IMR-90 (cell line): ENCODE measurements at regions of chr5 and their contacts with region 1.

Region 1: GRCh38 chr5:151499501-151500035 is 52.2 kb downstream of the SLC36A1 start:
- DNase-seq: no peak
- ATAC-seq: no peak
- H3K4me3 ChIP-seq: no peak overlapping the region
- H3K27ac ChIP-seq: no peak overlapping the region
- H3K4me1 ChIP-seq: no peaks in the 10 kb centered on the region
- H3K27me3 ChIP-seq: no peaks in the 10 kb centered on the region
- CTCF ChIP-seq: no peak
- POLR2A ChIP-seq: no peak
- RAD21 ChIP-seq: no peak

Region 2: DNA sequence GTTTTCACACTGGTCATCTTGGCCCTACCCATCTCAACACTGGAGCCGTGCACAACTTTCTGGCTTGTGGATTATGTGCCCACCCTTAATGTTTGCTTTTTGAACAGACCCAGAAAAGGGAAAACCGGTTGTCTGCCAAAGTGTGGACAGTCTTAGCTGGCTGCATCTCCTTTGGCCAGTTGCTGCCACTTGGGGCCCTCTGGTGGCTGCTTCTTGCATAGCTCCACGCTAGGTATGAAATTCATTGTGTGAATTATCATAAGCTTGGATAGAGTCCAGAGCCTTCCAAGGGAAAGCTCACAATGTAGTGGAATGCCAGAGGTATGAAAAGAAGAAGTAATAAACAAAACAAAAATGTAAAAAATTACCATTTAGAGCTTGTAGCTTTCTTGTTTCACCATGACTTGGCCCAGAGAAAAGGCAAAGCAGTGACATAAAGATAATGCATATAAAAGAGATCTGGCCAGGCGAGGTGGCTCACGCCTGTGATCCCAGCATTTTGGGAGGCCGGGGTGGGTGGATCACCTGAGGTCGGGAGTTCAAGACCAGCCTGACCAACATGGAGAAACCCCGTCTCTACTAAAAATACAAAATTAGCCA is 183.5 kb before region 1 on chr5:
- CTCF ChIA-PET with region 1: no interaction called
- POLR2A ChIA-PET with region 1: no interaction called
- dilution Hi-C with region 1: no loop called
- in situ Hi-C with region 1: no loop called
- intact Hi-C with region 1: loop called (anchors 5 kb)
- DNase-seq: peak; percentile 63
- ATAC-seq: peak; percentile 95
- H3K4me3 ChIP-seq: no peak overlapping the region
- H3K27ac ChIP-seq: no peak overlapping the region
- H3K4me1 ChIP-seq: no peaks in the 10 kb centered on the region
- H3K27me3 ChIP-seq: no peaks in the 10 kb centered on the region
- CTCF ChIP-seq: peak; percentile 81
- POLR2A ChIP-seq: no peak
- RAD21 ChIP-seq: peak; percentile 63

Region 3: DNA sequence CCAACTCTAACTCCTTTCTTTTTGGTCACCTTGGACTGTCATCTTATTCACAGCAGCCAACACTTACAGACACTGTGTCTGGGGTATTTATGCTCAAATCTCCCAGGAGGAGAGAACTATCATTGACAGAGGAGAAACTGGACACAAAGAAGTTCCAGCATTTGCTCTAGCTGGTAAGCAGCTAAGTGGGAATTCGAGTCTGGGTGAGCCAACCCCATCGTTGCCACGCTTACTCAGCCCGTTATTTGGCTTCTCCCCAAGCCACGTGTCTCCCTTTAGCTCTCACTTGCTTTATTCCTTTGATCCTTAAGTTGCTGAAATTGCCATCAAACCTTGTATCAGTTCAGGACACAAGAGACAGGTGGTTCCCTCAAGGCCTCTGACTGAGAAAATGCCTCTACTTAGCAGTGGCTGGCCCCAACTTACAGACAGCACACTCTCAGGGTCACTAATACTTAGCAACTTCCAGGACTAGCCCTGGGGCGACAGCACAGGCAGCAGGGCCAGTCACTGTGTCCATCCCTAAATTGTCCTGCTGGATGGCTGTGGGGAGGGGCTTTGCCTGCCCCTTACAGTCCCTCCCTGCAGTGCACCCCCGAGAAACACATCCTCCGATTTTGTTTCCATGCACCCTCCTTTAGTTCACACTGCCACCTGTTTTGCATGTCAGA is 153.6 kb before region 1 on chr5:
- CTCF ChIA-PET with region 1: no interaction called
- POLR2A ChIA-PET with region 1: no interaction called
- dilution Hi-C with region 1: no loop called
- in situ Hi-C with region 1: no loop called
- intact Hi-C with region 1: no loop called
- DNase-seq: peak; percentile 28
- ATAC-seq: peak; percentile 53; the same call in 1 of the 2 replicates
- H3K4me3 ChIP-seq: no peak overlapping the region
- H3K27ac ChIP-seq: no peak overlapping the region
- H3K4me1 ChIP-seq: no peaks in the 10 kb centered on the region
- H3K27me3 ChIP-seq: peaks cover 5% of the 10 kb centered on the region
- CTCF ChIP-seq: no peak
- POLR2A ChIP-seq: no peak
- RAD21 ChIP-seq: no peak

Region 4: DNA sequence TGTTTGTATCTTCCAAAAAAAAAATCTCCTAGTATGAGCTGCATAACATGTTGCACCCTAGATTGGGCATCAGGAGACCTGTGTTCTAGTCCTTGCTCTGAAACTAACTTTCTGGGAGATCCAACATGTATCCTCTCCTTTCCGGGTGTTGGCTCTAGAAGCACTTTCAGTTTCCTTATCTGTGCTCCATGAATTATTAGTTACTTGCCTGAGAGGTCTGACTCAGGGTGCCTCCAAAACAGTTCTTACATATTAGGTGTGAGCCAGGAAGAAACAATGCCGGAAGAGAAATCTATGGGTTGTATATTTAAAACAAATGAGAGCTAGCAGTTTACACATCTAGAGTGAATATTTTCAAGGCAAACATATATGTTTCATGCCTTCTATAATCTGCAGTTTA is 115.5 kb before region 1 on chr5:
- CTCF ChIA-PET with region 1: no interaction called
- POLR2A ChIA-PET with region 1: no interaction called
- dilution Hi-C with region 1: no loop called
- in situ Hi-C with region 1: no loop called
- intact Hi-C with region 1: loop called (anchors 5 kb)
- DNase-seq: peak; percentile 5
- ATAC-seq: peak; percentile 53
- H3K4me3 ChIP-seq: no peak overlapping the region
- H3K27ac ChIP-seq: no peak overlapping the region
- H3K4me1 ChIP-seq: no peaks in the 10 kb centered on the region
- H3K27me3 ChIP-seq: no peaks in the 10 kb centered on the region; the same call in 1 of the 2 replicates
- CTCF ChIP-seq: no peak
- POLR2A ChIP-seq: no peak
- RAD21 ChIP-seq: no peak

Region 5: GRCh38 chr5:151447174-151448037 is 52.2 kb before region 1 on chr5 and contains the start of gene SLC36A1:
- CTCF ChIA-PET with region 1: interaction called, 26 read pairs
- POLR2A ChIA-PET with region 1: no interaction called
- dilution Hi-C with region 1: no loop called
- in situ Hi-C with region 1: loop called (anchors 5 kb)
- intact Hi-C with region 1: loop called (anchors 1 kb)
- DNase-seq: peak; percentile 86
- ATAC-seq: peak; percentile 90
- H3K4me3 ChIP-seq: peak within 1 kb of the TSS; percentile 74
- H3K27ac ChIP-seq: peak within 1 kb of the TSS; percentile 50
- H3K4me1 ChIP-seq: peaks cover 12% of the 10 kb centered on the region
- H3K27me3 ChIP-seq: peaks cover 2% of the 10 kb centered on the region; the same call in 1 of the 2 replicates
- CTCF ChIP-seq: peak; percentile 93
- POLR2A ChIP-seq: peak; percentile 41; the same call in 1 of the 2 replicates
- RAD21 ChIP-seq: peak; percentile 90
- total RNA-seq, gene SLC36A1: 5.3 and 5.7 TPM in 2 replicates

Region 6: DNA sequence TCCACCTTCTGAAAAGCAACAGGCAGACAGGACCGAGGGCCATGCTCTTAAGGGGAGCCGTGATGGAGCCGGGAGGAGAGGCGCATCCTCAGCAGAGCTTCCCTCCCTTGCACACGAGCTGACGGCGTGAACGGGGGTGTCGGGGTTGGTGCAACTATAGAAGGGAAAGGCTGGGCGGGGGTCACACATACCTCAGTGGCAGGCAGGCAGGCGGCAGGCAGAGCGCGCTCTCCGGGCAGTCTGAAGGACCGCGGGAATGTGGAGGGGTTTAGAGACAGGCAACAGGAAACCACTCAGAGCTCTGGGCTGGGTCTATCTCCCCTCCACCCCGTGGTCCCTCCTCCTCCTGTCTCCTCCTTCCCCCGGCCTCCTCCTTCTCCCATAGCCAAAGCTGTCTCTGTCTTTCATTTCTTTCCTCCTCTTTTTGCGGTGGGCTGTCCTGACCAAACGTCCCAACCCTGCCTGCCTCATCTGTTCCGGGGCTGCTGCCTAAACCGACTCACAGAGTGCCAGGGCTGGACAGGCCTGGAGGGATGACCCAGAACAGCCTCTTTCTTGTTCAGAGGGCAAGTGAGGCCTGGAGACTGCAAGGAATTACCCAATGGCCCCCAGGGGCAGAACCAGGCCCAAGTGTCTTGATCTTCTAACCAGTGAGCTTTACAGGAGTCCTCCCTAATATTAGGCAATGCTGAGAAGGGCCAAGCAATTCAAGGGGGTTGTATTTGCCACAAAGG is 187.3 kb after region 1 on chr5 and contains the start of gene SPARC:
- CTCF ChIA-PET with region 1: no interaction called
- POLR2A ChIA-PET with region 1: no interaction called
- dilution Hi-C with region 1: no loop called
- in situ Hi-C with region 1: no loop called
- intact Hi-C with region 1: no loop called
- DNase-seq: peak; percentile 96
- ATAC-seq: peak; percentile 85
- H3K4me3 ChIP-seq: peak within 1 kb of the TSS; percentile 84
- H3K27ac ChIP-seq: peak within 1 kb of the TSS; percentile 96
- H3K4me1 ChIP-seq: peaks cover 20% of the 10 kb centered on the region
- H3K27me3 ChIP-seq: no peaks in the 10 kb centered on the region
- CTCF ChIP-seq: no peak
- POLR2A ChIP-seq: peak; percentile 99
- RAD21 ChIP-seq: 0 out of 2 replicates have a peak, but pooled peaks have one; percentile 15
- total RNA-seq, gene SPARC: 1,186 and 1,450 TPM in 2 replicates